ENCODE measurements at regions of chr13 and their contacts with region 1.

Region 1: GRCh38 chr13:66794340-66795031 is 435.6 kb downstream of the PCDH9 start:
- DNase-seq: peak; percentile 92
- H3K4me3 ChIP-seq: peak overlapping the region; percentile 39
- H3K27ac ChIP-seq: peak overlapping the region; percentile 94
- H3K4me1 ChIP-seq: peaks cover 35% of the 10 kb centered on the region
- CTCF ChIP-seq: no peak

Region 2: DNA sequence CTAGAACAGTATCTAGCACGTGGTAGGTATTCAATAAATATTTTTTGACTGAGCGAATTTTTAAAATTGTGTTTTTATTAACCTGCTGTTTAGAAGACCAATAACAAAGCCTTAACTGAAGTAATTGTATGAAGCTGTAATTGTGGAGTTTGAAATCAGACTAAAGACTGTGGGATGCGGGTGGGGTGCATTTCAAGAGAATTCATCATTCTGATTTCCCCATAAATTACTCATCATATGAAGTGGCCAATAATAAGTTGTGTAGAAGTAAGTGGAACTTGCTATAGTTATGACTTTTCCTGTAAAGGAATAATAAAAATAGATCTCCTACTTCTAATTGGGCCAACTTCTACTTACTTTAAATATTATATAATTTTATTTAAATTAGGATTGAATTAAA is 13.7 kb before region 1 on chr13:
- CTCF ChIA-PET with region 1: no interaction called
- POLR2A ChIA-PET with region 1: interaction called, 27 read pairs
- intact Hi-C with region 1: no loop called
- DNase-seq: no peak
- H3K4me3 ChIP-seq: no peak overlapping the region
- H3K27ac ChIP-seq: no peak overlapping the region
- H3K4me1 ChIP-seq: no peaks in the 10 kb centered on the region
- CTCF ChIP-seq: no peak

Region 3: GRCh38 chr13:66805657-66806056 is 11.2 kb after region 1 on chr13:
- CTCF ChIA-PET with region 1: no interaction called
- POLR2A ChIA-PET with region 1: interaction called, 10 read pairs
- intact Hi-C with region 1: no loop called
- DNase-seq: no peak
- H3K4me3 ChIP-seq: no peak overlapping the region
- H3K27ac ChIP-seq: no peak overlapping the region
- H3K4me1 ChIP-seq: no peaks in the 10 kb centered on the region
- CTCF ChIP-seq: no peak

Region 4: GRCh38 chr13:66994097-66994496 is 199.6 kb after region 1 on chr13:
- CTCF ChIA-PET with region 1: no interaction called
- POLR2A ChIA-PET with region 1: interaction called, 4 read pairs
- intact Hi-C with region 1: loop called (anchors 1 kb)
- DNase-seq: peak; percentile 90
- H3K4me3 ChIP-seq: peak overlapping the region; percentile 49
- H3K27ac ChIP-seq: peak overlapping the region; percentile 99
- H3K4me1 ChIP-seq: peaks cover 70% of the 10 kb centered on the region
- CTCF ChIP-seq: peak; percentile 81

Measured in OCI-LY7 (cell line).